Heart right ventricle (tissue), 16 donors: ENCODE measurements at regions of chr2 and their contacts with region 1.

Region 1: GRCh38 chr2:168455648-168456520 is at the start of gene CERS6:
- DNase-seq: peak; percentile 96 to 97
- ATAC-seq: peak; percentile 96 to 99 (median 98)
- H3K4me3 ChIP-seq: peak within 1 kb of the TSS; percentile 71 to 97 (median 84)
- H3K27ac ChIP-seq: peak within 1 kb of the TSS; percentile 66 to 93 (median 84)
- H3K4me1 ChIP-seq: peaks cover 0 to 36% (median 7%) of the 10 kb centered on the region in 9 donors
- H3K27me3 ChIP-seq: no peaks in the 10 kb centered on the region
- CTCF ChIP-seq: no peak
- total RNA-seq, gene CERS6: 47.4 to 76.3 (median 58.2) TPM

Region 2: GRCh38 chr2:168429988-168430387 is 25.9 kb before region 1 on chr2:
- intact Hi-C with region 1: loop called in 1 of 10 experiments (anchors 2 kb)
- DNase-seq: no peak
- ATAC-seq: no peak
- H3K4me3 ChIP-seq: no peak overlapping the region
- H3K27ac ChIP-seq: no peak overlapping the region
- H3K4me1 ChIP-seq: peaks cover 0 to 5% (median 0%) of the 10 kb centered on the region in 9 donors
- H3K27me3 ChIP-seq: no peaks in the 10 kb centered on the region
- CTCF ChIP-seq: no peak

Region 3: GRCh38 chr2:168530982-168531622 is 75.2 kb after region 1 on chr2:
- intact Hi-C with region 1: loop called in 2 of 10 experiments (anchors 2 to 5 kb)
- DNase-seq: no peak
- ATAC-seq: peak in 3 of 8 donors; percentile 38 to 44 (median 42)
- H3K4me3 ChIP-seq: no peak overlapping the region
- H3K27ac ChIP-seq: peak overlapping the region; percentile 17 to 86 (median 80)
- H3K4me1 ChIP-seq: peaks cover 8 to 88% (median 44%) of the 10 kb centered on the region in 9 donors
- H3K27me3 ChIP-seq: no peaks in the 10 kb centered on the region
- CTCF ChIP-seq: no peak

Region 4: GRCh38 chr2:168687314-168687713 is 231.4 kb after region 1 on chr2:
- intact Hi-C with region 1: loop called in 2 of 10 experiments (anchors 10 kb)
- DNase-seq: no peak
- ATAC-seq: peak in 5 of 8 donors; percentile 54 to 70 (median 57)
- H3K4me3 ChIP-seq: no peak overlapping the region
- H3K27ac ChIP-seq: no peak overlapping the region
- H3K4me1 ChIP-seq: peaks cover 0 to 32% (median 3%) of the 10 kb centered on the region in 9 donors
- H3K27me3 ChIP-seq: no peaks in the 10 kb centered on the region
- CTCF ChIP-seq: peak in 7 of 9 donors; percentile 14 to 54 (median 33)

Region 5: GRCh38 chr2:168758970-168759820 is 303.3 kb after region 1 on chr2:
- intact Hi-C with region 1: loop called in 4 of 10 experiments (anchors 5 to 10 kb)
- DNase-seq: peak in 1 of 2 donors; percentile 25
- ATAC-seq: peak; percentile 54 to 78 (median 72)
- H3K4me3 ChIP-seq: no peak overlapping the region
- H3K27ac ChIP-seq: no peak overlapping the region
- H3K4me1 ChIP-seq: peaks cover 0 to 30% (median 17%) of the 10 kb centered on the region in 9 donors
- H3K27me3 ChIP-seq: no peaks in the 10 kb centered on the region
- CTCF ChIP-seq: peak; percentile 39 to 77 (median 64)